Activated T-helper 1 cell treated with anti-CD3 and anti-CD28 coated beads, Interleukin-12 subunit alpha, Interleukin-12 subunit beta, Interleukin-2, Interleukin-4 antibody, amounts not matched to agents 30 ng/mL and 10 ng/mL and 1 ng/mL, durations not matched to agents 14 hours and 24 hours and 36 hours (primary cell): ENCODE measurements at regions of chr1 and their contacts with region 1.

Region 1: GRCh38 chr1:179293340-179294327 is at the start of gene SOAT1:
- DNase-seq: peak; percentile 88
- H3K4me3 Mint-ChIP-seq: peak within 1 kb of the TSS; percentile 99
- H3K27ac Mint-ChIP-seq: peak within 1 kb of the TSS; percentile 96
- H3K4me1 Mint-ChIP-seq: peaks cover 41% of the 10 kb centered on the region
- H3K27me3 Mint-ChIP-seq: no peaks in the 10 kb centered on the region
- total RNA-seq, gene SOAT1: 48.7 and 49.0 TPM in 2 replicates

Region 2: GRCh38 chr1:179025125-179025974 is 268.3 kb before region 1 on chr1 and contains the start of gene FAM20B:
- intact Hi-C with region 1: loop called (anchors 2 kb)
- DNase-seq: peak; percentile 86
- H3K4me3 Mint-ChIP-seq: peak within 1 kb of the TSS; percentile 89
- H3K27ac Mint-ChIP-seq: peak within 1 kb of the TSS; percentile 82
- H3K4me1 Mint-ChIP-seq: peaks cover 43% of the 10 kb centered on the region
- H3K27me3 Mint-ChIP-seq: peaks cover 18% of the 10 kb centered on the region
- total RNA-seq, gene FAM20B: 36.6 and 39.2 TPM in 2 replicates

Region 3: DNA sequence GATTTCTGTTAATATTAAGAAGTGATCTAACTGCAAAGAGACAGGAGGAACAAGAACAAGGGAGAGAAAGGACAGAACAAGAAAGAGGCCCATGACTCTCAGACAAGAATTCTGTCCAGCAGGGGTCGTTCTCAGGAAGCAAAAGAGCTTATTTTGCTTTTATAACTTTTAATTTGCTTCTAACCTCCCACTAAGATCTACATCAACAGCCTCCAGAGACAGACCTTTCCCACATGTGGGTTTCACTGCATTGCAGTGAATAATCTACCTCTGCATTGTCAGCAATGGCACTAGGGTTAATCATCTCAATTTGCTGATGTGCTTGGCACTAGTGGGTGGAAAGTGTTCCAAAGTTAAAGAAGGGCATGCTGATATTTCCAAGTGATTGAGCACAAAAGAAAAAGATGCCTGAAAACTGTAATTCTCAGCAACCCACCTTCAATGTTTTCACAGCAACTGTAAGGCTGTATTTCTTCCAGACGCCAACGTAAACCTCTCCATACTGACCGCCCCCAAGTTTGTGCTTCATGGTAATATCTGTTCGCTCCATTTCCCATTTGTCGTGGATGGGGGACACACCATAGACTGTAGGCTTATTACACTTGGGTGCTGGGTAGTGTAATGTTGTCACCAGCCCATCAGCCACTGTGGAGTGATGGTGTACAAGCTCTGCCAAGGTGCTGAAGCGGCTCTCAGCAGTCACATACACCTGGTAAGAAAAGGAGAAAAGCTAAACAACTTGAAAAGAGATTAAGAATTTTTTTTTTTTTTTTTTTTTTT is 172.3 kb before region 1 on chr1:
- intact Hi-C with region 1: loop called (anchors 1 kb)
- DNase-seq: peak; percentile 13
- H3K4me3 Mint-ChIP-seq: no peak overlapping the region
- H3K27ac Mint-ChIP-seq: no peak overlapping the region
- H3K4me1 Mint-ChIP-seq: peaks cover 9% of the 10 kb centered on the region
- H3K27me3 Mint-ChIP-seq: no peaks in the 10 kb centered on the region

Region 4: GRCh38 chr1:179208681-179209477 is 84.8 kb before region 1 on chr1:
- intact Hi-C with region 1: no loop called
- DNase-seq: no peak
- H3K4me3 Mint-ChIP-seq: no peak overlapping the region
- H3K27ac Mint-ChIP-seq: no peak overlapping the region
- H3K4me1 Mint-ChIP-seq: peaks cover 5% of the 10 kb centered on the region
- H3K27me3 Mint-ChIP-seq: no peaks in the 10 kb centered on the region

Region 5: DNA sequence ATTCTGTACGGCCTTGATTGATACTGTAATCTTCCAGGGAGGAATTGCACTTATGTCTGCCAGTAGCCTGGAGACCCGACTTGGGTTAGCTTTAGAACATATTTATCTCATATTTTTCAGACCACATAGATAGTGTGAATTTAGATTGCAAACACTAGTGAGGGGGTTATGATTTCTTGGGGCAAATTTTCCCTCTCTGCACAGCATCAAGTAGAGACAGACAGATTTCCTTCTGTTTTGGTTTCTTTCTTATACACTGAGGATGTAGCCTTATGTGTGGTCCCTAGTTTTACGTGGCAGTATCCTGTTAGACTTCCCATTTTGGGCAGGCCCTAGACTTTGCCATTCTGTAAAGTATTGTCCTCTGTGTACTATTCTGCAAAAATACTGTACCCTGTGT is 28.9 kb after region 1 on chr1:
- intact Hi-C with region 1: loop called (anchors 2 kb)
- DNase-seq: no peak
- H3K4me3 Mint-ChIP-seq: no peak overlapping the region
- H3K27ac Mint-ChIP-seq: no peak overlapping the region
- H3K4me1 Mint-ChIP-seq: peaks cover 28% of the 10 kb centered on the region
- H3K27me3 Mint-ChIP-seq: no peaks in the 10 kb centered on the region

Region 6: DNA sequence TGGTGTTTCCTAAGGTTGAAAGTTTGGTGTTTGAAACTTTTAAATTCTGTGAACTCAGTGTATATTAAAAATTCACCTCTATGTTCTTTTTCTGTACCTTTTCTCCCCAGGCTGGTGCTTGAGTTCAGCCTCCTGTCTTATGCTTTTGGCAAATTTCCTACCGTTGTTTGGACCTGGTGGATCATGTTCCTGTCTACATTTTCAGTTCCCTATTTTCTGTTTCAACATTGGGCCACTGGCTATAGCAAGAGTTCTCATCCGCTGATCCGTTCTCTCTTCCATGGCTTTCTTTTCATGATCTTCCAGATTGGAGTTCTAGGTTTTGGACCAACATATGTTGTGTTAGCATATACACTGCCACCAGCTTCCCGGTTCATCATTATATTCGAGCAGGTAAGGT is 47.3 kb after region 1 on chr1:
- intact Hi-C with region 1: loop called (anchors 2 kb)
- DNase-seq: no peak
- H3K4me3 Mint-ChIP-seq: no peak overlapping the region
- H3K27ac Mint-ChIP-seq: no peak overlapping the region
- H3K4me1 Mint-ChIP-seq: peaks cover 18% of the 10 kb centered on the region
- H3K27me3 Mint-ChIP-seq: no peaks in the 10 kb centered on the region

Region 7: GRCh38 chr1:179353546-179353945 is 59.9 kb after region 1 on chr1:
- intact Hi-C with region 1: no loop called
- DNase-seq: no peak
- H3K4me3 Mint-ChIP-seq: no peak overlapping the region
- H3K27ac Mint-ChIP-seq: no peak overlapping the region
- H3K4me1 Mint-ChIP-seq: peaks cover 13% of the 10 kb centered on the region
- H3K27me3 Mint-ChIP-seq: no peaks in the 10 kb centered on the region